A549 (cell line): ENCODE measurements at regions of chr17 and their contacts with region 1.

Region 1: GRCh38 chr17:68435876-68436842 is 21.1 kb downstream of the WIPI1 start:
- DNase-seq: peak; percentile 78 to 82
- ATAC-seq: peak; percentile 82 to 91
- H3K4me3 ChIP-seq: no peak overlapping the region
- H3K27ac ChIP-seq: no peak overlapping the region
- H3K4me1 ChIP-seq: 0 out of 3 replicates have a peak, but pooled peaks cover 3% of the 10 kb centered on the region
- CTCF ChIP-seq: peak; percentile 91
- EP300 ChIP-seq: no peak
- POLR2A ChIP-seq: no peak
- RAD21 ChIP-seq: peak; percentile 85 to 95

Region 2: GRCh38 chr17:67696853-67697505 is 739.2 kb before region 1 on chr17:
- CTCF ChIA-PET with region 1: no interaction called
- POLR2A ChIA-PET with region 1: no interaction called
- DNase-seq: no peak
- ATAC-seq: no peak
- H3K4me3 ChIP-seq: no peak overlapping the region
- H3K27ac ChIP-seq: no peak overlapping the region
- H3K4me1 ChIP-seq: no peaks in the 10 kb centered on the region
- CTCF ChIP-seq: no peak
- EP300 ChIP-seq: no peak
- POLR2A ChIP-seq: no peak
- RAD21 ChIP-seq: no peak

Region 3: DNA sequence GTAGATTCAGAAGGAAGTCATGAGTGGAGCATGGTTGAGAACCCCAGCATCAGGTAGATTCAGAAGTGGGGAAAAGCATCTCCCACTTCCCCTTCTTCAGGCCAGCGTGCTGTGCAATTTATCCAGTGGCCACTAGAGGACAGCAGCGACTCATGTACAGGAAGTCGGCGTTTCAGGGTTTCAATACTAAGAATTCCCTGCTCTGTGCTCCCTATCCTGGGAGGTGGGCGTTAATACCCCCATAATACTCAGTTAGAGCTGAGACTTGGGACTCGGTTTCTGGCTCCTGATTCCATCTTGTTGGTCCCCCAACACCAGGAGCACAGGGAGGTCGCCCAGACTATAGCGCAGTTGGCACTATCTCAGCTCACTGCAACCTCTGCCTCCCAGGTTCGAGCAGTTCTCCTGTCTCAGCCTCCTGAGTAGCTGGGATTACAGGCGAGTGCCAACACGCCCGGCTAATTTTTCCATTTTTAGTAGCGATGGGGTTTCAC is 263.7 kb before region 1 on chr17:
- CTCF ChIA-PET with region 1: interaction called, 17 read pairs
- POLR2A ChIA-PET with region 1: no interaction called
- DNase-seq: peak; percentile 18 to 71
- ATAC-seq: peak; percentile 84 to 92
- H3K4me3 ChIP-seq: no peak overlapping the region
- H3K27ac ChIP-seq: no peak overlapping the region
- H3K4me1 ChIP-seq: no peaks in the 10 kb centered on the region
- CTCF ChIP-seq: peak; percentile 99
- EP300 ChIP-seq: no peak
- POLR2A ChIP-seq: no peak
- RAD21 ChIP-seq: peak; percentile 96 to 98

Region 4: DNA sequence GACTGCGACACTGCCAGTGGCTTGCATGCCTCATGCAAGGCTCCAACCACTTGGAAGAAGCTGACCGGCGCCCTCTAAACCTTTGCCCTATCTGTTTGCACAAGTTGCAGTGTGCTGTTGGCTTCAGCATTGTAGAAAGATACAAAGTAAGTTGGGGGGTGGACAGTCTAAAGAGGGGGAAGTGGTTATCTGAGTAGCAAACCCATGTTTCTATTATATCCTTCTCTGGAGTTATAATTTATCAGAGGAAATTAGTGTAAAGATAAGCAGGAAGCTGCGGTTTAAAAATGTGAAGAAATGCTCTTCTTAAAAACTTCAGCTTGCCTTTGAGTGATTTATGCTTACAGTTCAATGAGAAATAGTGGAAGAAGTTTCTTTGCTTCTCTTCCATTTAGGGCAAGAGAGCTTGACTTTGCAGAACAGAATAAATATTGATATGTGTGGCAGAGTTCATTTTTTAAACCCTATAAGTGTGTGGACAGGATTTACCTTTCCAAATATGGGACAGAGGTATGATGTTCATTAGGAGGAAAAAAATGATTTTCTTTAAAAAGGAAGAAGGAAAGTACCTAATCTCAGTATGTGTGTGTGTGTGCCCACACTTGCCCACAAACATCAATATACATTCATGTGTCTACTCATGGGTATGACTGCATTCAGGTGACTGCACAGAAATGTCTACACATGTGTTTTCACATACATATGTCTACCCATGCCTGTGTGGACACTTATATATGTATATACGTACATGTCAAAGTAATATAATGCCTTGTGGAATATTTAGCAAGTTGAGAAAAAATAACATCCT is 180.2 kb before region 1 on chr17:
- CTCF ChIA-PET with region 1: interaction called, 89 read pairs
- POLR2A ChIA-PET with region 1: no interaction called
- DNase-seq: no peak
- ATAC-seq: no peak
- H3K4me3 ChIP-seq: no peak overlapping the region
- H3K27ac ChIP-seq: no peak overlapping the region
- H3K4me1 ChIP-seq: no peaks in the 10 kb centered on the region
- CTCF ChIP-seq: no peak
- EP300 ChIP-seq: no peak
- POLR2A ChIP-seq: no peak
- RAD21 ChIP-seq: no peak

Region 5: GRCh38 chr17:68327823-68328570 is 108.2 kb before region 1 on chr17:
- CTCF ChIA-PET with region 1: interaction called, 10 read pairs
- POLR2A ChIA-PET with region 1: no interaction called
- DNase-seq: no peak
- ATAC-seq: peak in 1 of 2 experiments; percentile 25; a peak in 1 of 6 replicates
- H3K4me3 ChIP-seq: no peak overlapping the region
- H3K27ac ChIP-seq: no peak overlapping the region
- H3K4me1 ChIP-seq: no peaks in the 10 kb centered on the region
- CTCF ChIP-seq: no peak
- EP300 ChIP-seq: no peak
- POLR2A ChIP-seq: no peak
- RAD21 ChIP-seq: no peak

Region 6: DNA sequence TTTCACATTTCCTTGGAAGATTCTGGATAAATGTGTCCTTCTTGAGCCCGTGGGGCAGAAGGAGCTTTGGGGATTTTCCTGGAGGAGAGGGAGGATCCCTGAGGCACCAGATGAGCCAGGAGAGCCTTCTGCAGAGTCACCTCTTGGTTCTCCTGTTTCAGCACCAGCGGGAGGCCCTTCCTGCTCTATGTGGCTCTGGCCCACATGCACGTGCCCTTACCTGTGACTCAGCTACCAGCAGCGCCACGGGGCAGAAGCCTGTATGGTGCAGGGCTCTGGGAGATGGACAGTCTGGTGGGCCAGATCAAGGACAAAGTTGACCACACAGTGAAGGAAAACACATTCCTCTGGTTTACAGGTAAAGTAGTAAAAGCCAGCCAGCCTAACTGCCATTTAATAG is 67.8 kb before region 1 on chr17:
- CTCF ChIA-PET with region 1: no interaction called
- POLR2A ChIA-PET with region 1: no interaction called
- DNase-seq: no peak
- ATAC-seq: no peak
- H3K4me3 ChIP-seq: no peak overlapping the region
- H3K27ac ChIP-seq: no peak overlapping the region
- H3K4me1 ChIP-seq: no peaks in the 10 kb centered on the region
- CTCF ChIP-seq: no peak
- EP300 ChIP-seq: no peak
- POLR2A ChIP-seq: no peak
- RAD21 ChIP-seq: no peak

Region 7: GRCh38 chr17:68417317-68417716 is 18.8 kb before region 1 on chr17:
- CTCF ChIA-PET with region 1: interaction called, 12 read pairs
- POLR2A ChIA-PET with region 1: no interaction called
- DNase-seq: no peak
- ATAC-seq: no peak
- H3K4me3 ChIP-seq: no peak overlapping the region
- H3K27ac ChIP-seq: no peak overlapping the region
- H3K4me1 ChIP-seq: no peaks in the 10 kb centered on the region
- CTCF ChIP-seq: no peak
- EP300 ChIP-seq: no peak
- POLR2A ChIP-seq: no peak
- RAD21 ChIP-seq: no peak

Region 8: GRCh38 chr17:68457539-68458259 is 21.5 kb after region 1 on chr17:
- CTCF ChIA-PET with region 1: interaction called, 115 read pairs
- POLR2A ChIA-PET with region 1: interaction called, 3 read pairs
- DNase-seq: peak; percentile 97 to 98
- ATAC-seq: peak; percentile 87 to 93
- H3K4me3 ChIP-seq: peak overlapping the region; percentile 92
- H3K27ac ChIP-seq: no peak overlapping the region
- H3K4me1 ChIP-seq: peaks cover 17% of the 10 kb centered on the region
- CTCF ChIP-seq: no peak
- EP300 ChIP-seq: no peak
- POLR2A ChIP-seq: no peak
- RAD21 ChIP-seq: no peak

Region 9: GRCh38 chr17:68509141-68510057 is 73.2 kb after region 1 on chr17:
- CTCF ChIA-PET with region 1: no interaction called
- POLR2A ChIA-PET with region 1: no interaction called
- DNase-seq: no peak
- ATAC-seq: no peak
- H3K4me3 ChIP-seq: no peak overlapping the region
- H3K27ac ChIP-seq: no peak overlapping the region
- H3K4me1 ChIP-seq: peaks cover 13% of the 10 kb centered on the region
- CTCF ChIP-seq: no peak
- EP300 ChIP-seq: no peak
- POLR2A ChIP-seq: no peak
- RAD21 ChIP-seq: no peak